Vagina (tissue), 2 donors: ENCODE measurements at regions of chr12 and their contacts with region 1.

Region 1: GRCh38 chr12:31250179-31250578 is 75.8 kb downstream of the SINHCAF start:
- DNase-seq: no peak
- H3K4me3 ChIP-seq: no peak overlapping the region
- H3K27ac ChIP-seq: no peak overlapping the region
- H3K4me1 ChIP-seq: no peaks in the 10 kb centered on the region
- H3K27me3 ChIP-seq: no peaks in the 10 kb centered on the region
- CTCF ChIP-seq: no peak
- POLR2A ChIP-seq: no peak

Region 2: DNA sequence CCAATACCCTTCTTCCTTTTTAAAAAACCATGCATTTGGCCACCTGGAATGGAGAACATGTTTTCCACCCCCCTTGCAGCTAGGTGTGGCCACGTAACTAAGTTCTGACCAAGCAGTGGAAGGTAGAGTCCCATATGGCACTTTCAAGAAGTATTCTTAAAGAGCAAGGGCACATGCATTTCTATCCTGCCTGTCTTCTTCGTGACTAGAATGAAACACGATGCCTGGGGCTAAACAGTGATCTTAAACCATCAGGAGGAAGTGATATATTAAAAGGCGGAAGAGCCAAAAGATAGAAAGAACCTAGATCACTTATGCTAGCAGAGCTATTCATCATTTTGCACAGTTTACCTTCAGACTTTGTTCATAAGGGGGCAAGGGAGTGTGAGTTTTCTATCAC is 192.5 kb before region 1 on chr12:
- intact Hi-C with region 1: no loop called
- DNase-seq: no peak
- H3K4me3 ChIP-seq: no peak overlapping the region
- H3K27ac ChIP-seq: no peak overlapping the region
- H3K4me1 ChIP-seq: no peaks in the 10 kb centered on the region
- H3K27me3 ChIP-seq: no peaks in the 10 kb centered on the region
- CTCF ChIP-seq: no peak
- POLR2A ChIP-seq: no peak

Region 3: DNA sequence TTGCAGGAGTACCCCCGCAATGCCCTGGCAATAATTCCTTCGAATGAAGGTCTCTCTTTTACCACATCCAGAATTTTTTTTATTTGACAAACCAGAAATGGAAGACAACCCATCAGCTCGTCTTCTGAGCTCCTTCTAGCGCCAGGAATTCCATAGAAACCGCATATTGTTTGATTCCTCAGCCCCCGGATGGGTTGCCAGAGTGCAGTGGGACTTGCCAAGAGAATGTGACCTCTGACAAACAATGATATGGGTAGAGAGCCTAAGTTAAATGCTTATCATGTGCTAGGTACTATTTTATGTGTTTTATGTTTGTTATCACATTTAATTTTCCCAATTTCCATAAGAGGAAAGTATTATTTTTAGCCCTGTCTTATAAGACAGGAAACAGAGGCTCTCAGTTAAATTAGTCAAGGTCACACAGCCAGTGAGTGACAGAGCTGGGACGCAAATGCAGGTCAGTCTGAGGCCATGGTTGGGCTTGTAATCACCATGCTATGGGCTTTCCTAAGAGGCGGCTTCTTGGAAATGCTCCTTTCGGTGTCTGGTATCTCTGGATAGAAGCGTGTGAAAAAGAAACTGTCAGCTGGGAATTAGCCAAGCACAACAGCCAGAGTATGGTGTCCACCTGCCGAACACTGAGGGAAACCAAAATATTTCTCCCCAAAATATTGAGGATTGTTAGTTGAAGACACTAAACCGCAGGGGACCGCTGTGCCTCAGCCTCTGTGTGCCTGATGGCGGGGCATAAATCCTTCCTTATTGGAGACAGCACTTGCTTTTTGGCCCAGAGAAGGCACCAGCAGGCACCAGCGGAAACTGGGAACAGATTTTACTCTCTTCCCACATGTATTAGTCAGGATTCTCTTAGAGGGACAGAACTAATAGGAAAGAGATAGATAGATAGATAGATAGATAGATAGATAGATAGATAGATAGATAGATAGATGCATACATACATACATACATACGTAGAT is 379.9 kb after region 1 on chr12:
- intact Hi-C with region 1: loop called (anchors 10 kb)
- DNase-seq: no peak
- H3K4me3 ChIP-seq: no peak overlapping the region
- H3K27ac ChIP-seq: no peak overlapping the region
- H3K4me1 ChIP-seq: peaks cover 11% of the 10 kb centered on the region
- H3K27me3 ChIP-seq: no peaks in the 10 kb centered on the region
- CTCF ChIP-seq: no peak
- POLR2A ChIP-seq: no peak